HEK293 (cell line): ENCODE measurements at regions of chr6 and their contacts with region 1.

Region 1: GRCh38 chr6:33147807-33148666 is 44.2 kb downstream of the COL11A2 start:
- H3K4me3 ChIP-seq: no peak overlapping the region
- H3K27ac ChIP-seq: no peak overlapping the region
- H3K4me1 ChIP-seq: no peaks in the 10 kb centered on the region
- CTCF ChIP-seq: 0 out of 2 replicates have a peak, but pooled peaks have one; percentile 30

Region 2: DNA sequence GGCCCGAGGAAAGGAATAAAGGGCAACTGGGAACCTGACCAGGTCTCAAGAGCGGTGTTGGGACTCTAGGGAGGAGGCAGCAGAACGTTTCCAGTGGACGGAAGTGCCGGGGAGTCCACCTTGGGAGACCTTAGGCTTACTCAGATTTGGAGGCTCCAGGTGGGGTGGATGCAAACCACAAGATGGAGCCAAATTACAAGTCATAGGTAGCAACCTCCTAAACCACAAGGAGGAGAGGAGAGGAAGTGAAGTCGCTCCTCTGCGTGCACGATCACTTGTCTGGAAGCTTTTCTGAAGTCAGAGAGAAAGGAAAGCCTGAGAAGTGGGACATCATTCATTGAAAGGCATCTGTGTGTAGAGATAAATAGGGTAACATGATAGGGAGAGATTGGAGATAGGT is 148.0 kb before region 1 on chr6:
- CTCF ChIA-PET with region 1: interaction called, 24 read pairs
- POLR2A ChIA-PET with region 1: no interaction called
- H3K4me3 ChIP-seq: no peak overlapping the region
- H3K27ac ChIP-seq: no peak overlapping the region
- H3K4me1 ChIP-seq: no peaks in the 10 kb centered on the region
- CTCF ChIP-seq: peak; percentile 74

Region 3: DNA sequence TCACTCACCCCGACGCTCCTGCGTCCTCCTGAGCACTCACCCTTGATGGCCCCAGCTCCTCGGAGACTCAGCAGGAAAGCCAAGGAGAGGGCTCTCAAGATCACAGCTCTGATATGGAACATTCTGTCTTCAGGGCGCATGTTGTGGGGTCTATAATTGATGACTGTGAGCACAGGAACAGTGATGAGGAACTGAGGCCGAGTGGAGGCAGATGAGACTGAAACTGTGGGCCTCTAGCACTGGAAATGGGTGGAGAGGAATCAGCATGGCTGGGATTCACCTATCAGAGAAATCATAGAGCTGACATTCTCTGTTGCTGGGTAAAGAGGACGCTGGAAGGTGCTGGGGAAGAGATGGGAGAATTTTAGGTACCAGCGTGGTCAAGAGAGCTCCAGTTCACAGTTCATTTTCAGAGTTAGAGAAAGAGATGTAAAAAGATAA is 74.6 kb before region 1 on chr6 and contains the start of gene HLA-DPA1:
- CTCF ChIA-PET with region 1: no interaction called
- POLR2A ChIA-PET with region 1: no interaction called
- H3K4me3 ChIP-seq: no peak within 1 kb of the TSS
- H3K27ac ChIP-seq: no peak within 1 kb of the TSS
- H3K4me1 ChIP-seq: peaks cover 5% of the 10 kb centered on the region
- CTCF ChIP-seq: no peak

Region 4: DNA sequence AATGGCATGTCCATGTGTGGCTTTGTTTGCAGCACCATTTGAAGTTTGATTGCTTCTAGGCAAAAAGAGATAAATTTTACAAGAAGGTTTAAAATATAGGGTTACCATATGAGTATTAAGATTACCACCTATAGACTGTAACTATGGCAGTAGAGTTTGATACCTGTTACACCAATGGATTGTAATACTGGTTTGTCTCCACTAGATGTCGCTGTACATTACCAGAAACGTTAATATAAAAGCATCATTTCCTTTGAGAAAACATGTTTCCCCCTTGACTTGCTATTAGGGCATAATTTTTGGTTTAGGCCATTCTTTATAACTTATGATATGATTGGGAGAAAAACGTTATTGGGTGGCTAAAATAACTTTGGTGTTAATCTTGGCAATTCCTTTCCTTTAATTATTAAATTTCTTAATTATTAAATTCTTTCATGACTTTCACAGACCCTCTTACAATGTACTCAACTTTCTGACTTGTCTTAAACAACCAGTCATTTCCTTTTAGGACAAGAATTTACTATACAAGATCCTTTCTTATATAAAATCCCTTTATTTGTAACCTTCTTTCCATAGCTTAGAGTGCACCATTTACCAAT is 29.4 kb before region 1 on chr6:
- CTCF ChIA-PET with region 1: interaction called, 176 read pairs
- POLR2A ChIA-PET with region 1: no interaction called
- H3K4me3 ChIP-seq: no peak overlapping the region
- H3K27ac ChIP-seq: no peak overlapping the region
- H3K4me1 ChIP-seq: no peaks in the 10 kb centered on the region
- CTCF ChIP-seq: 0 out of 2 replicates have a peak, but pooled peaks have one; percentile 20

Region 5: DNA sequence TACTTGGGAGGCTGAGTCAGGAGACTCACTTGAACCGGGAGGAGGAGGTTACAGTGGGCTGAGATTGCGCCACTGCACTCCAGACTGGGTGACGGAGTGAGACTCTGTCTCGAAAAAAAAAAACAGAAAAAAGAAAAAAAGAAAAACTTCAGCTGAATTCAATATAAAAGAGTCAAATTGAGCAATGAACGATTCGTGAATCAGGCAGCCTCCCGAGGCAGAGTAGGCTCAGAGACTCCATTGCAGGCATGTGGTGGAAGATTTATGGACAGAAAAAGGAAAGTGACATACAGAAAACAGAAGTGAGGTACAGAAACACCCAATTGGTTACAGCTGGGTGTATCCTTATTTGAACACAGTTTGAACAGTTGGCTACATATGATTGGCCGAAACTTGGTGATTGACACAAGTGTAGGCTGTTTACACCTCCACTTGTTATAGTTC is 15.9 kb before region 1 on chr6:
- CTCF ChIA-PET with region 1: interaction called, 176 read pairs
- POLR2A ChIA-PET with region 1: no interaction called
- H3K4me3 ChIP-seq: no peak overlapping the region
- H3K27ac ChIP-seq: no peak overlapping the region
- H3K4me1 ChIP-seq: no peaks in the 10 kb centered on the region
- CTCF ChIP-seq: no peak

Region 6: DNA sequence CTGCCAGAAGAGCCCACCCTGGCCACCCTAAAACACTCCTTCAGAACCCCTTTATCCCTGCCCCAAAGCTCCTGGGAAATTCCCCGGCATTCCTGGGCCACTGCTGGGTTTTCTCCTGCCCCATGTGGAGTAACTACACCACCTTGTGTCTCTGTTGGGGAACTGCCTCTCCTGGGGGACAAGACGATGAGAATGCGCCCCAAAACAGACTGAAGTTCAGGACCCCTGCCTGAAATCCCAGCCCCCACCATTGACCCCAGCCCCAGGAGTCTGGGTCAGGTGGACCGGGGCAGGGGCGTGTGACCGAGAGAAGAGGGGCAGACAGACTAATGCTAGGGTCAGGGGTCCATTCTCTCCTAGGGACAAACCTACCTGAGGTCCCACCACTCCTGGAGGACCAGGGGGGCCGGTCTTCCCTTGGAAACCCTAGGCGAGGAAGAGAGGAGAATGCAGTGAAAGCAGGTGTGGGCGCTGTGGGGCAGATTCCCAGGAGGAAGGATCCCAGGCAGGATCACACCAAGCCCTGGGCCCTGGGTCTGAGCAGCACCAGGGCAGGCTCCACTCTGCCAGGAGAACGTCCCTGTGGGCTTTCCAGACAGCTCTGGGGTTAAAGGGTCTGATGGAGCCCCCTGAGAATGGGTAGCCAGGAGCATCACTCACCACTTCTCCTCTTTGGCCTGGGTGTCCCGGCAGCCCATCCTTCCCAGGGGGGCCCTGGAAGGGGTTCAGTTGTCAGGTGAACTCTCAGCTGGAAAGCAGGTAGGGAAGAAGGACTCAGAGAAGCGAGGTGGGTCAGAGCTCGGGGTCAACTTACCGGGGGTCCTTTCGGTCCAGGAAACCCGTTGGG is 24.9 kb after region 1 on chr6:
- CTCF ChIA-PET with region 1: interaction called, 10 read pairs
- POLR2A ChIA-PET with region 1: no interaction called
- H3K4me3 ChIP-seq: no peak overlapping the region
- H3K27ac ChIP-seq: no peak overlapping the region
- H3K4me1 ChIP-seq: no peaks in the 10 kb centered on the region
- CTCF ChIP-seq: peak; percentile 83

Region 7: GRCh38 chr6:33794891-33795623 is 647.0 kb after region 1 on chr6:
- CTCF ChIA-PET with region 1: no interaction called
- POLR2A ChIA-PET with region 1: no interaction called
- H3K4me3 ChIP-seq: no peak overlapping the region
- H3K27ac ChIP-seq: no peak overlapping the region
- H3K4me1 ChIP-seq: peaks cover 5% of the 10 kb centered on the region
- CTCF ChIP-seq: no peak